Activated CD8-positive, alpha-beta T cell treated with anti-CD3 and anti-CD28 coated beads for 36 hours (primary cell): ENCODE measurements at regions of chr1 and their contacts with region 1.

Region 1: DNA sequence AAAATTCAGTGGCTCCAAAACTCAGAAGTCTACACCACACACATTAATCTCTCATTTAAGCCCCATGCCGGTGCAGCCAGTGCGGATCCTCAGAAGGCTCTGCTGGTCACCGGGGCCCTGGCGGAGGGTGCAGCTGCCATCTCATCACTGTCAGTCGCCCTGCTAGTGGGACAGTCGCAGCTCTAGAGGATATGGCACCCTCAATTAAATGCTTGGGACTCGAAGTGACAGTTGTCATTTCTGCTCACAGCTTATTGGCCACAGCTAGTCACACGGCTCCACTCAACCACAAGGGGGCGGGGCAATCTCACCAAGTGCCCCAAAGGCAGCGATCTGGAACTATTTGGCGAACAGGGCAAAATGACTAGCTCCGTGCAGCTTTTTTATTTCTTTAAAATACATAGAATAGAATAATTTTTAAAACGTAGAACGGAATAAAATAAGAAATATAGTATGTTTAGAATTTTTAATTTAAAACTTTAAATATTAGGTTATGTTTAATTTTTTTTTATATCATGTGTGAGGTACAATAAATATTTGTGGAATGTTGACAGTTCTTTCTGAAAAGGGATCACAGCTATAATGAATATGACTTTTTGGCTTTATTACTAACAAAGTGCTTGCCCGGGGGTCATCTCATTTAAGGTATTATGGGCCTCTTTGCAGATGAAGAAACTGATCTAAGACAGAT is 8.0 kb upstream of the MAN1C1 start:
- DNase-seq: peak; percentile 97
- ATAC-seq: peak; percentile 98
- H3K4me3 Mint-ChIP-seq: no peak overlapping the region
- H3K27ac Mint-ChIP-seq: no peak overlapping the region
- H3K4me1 Mint-ChIP-seq: peaks cover 16% of the 10 kb centered on the region
- H3K27me3 Mint-ChIP-seq: peaks cover 16% of the 10 kb centered on the region
- CTCF ChIP-seq: peak; percentile 28

Region 2: GRCh38 chr1:25572708-25573600 is 35.7 kb before region 1 on chr1:
- CTCF ChIA-PET with region 1: interaction called, 21 read pairs
- POLR2A ChIA-PET with region 1: no interaction called
- intact Hi-C with region 1: no loop called
- DNase-seq: peak; percentile 78
- ATAC-seq: peak; percentile 79
- H3K4me3 Mint-ChIP-seq: no peak overlapping the region
- H3K27ac Mint-ChIP-seq: no peak overlapping the region
- H3K4me1 Mint-ChIP-seq: peaks cover 48% of the 10 kb centered on the region
- H3K27me3 Mint-ChIP-seq: no peaks in the 10 kb centered on the region
- CTCF ChIP-seq: peak; percentile 82

Region 3: GRCh38 chr1:25651824-25652741 is 43.5 kb after region 1 on chr1:
- CTCF ChIA-PET with region 1: no interaction called
- POLR2A ChIA-PET with region 1: no interaction called
- intact Hi-C with region 1: no loop called
- DNase-seq: no peak
- ATAC-seq: no peak
- H3K4me3 Mint-ChIP-seq: no peak overlapping the region
- H3K27ac Mint-ChIP-seq: no peak overlapping the region
- H3K4me1 Mint-ChIP-seq: peaks cover 19% of the 10 kb centered on the region
- H3K27me3 Mint-ChIP-seq: no peaks in the 10 kb centered on the region
- CTCF ChIP-seq: no peak

Region 4: DNA sequence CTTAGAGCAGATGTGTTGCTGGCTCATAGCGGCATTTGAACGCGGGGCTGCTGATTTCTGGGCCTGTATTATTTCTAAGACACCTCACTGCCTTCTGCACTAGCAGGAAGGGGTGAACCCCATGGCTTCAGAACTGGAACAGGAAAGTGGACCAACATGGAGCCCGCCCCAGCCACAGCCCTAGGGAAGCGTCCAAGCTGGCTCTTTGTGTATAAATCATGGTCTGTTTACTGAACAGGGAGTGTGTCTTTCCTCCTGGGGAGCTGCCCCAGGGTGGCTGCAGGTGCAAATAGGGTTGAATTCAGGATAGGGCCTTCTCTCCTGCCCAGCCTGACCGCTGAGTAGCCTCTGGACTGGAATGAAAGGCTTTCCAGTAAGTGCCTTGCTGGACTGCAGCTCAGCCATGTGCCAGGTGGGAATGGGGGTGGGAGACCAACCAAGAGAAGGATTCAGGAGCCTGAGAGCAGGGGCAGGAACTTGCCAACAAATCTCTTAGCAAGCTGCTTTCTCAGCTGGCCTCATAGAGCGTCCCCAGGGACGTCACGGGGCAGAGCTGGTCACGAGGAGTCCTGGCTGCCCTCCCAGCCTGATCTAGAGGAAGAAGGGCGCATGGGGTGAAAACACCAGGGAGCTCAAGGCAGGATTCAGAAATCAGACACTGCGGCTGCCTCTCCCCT is 134.7 kb after region 1 on chr1:
- CTCF ChIA-PET with region 1: no interaction called
- POLR2A ChIA-PET with region 1: no interaction called
- intact Hi-C with region 1: no loop called
- DNase-seq: no peak
- ATAC-seq: no peak
- H3K4me3 Mint-ChIP-seq: no peak overlapping the region
- H3K27ac Mint-ChIP-seq: no peak overlapping the region
- H3K4me1 Mint-ChIP-seq: peaks cover 9% of the 10 kb centered on the region
- H3K27me3 Mint-ChIP-seq: no peaks in the 10 kb centered on the region
- CTCF ChIP-seq: no peak

Region 5: GRCh38 chr1:25796811-25797458 is 188.3 kb after region 1 on chr1:
- CTCF ChIA-PET with region 1: interaction called, 17 read pairs
- POLR2A ChIA-PET with region 1: no interaction called
- intact Hi-C with region 1: loop called (anchors 5 kb)
- DNase-seq: peak; percentile 92
- ATAC-seq: peak; percentile 57
- H3K4me3 Mint-ChIP-seq: peak overlapping the region; percentile 45
- H3K27ac Mint-ChIP-seq: peak overlapping the region; percentile 78
- H3K4me1 Mint-ChIP-seq: peaks cover 44% of the 10 kb centered on the region
- H3K27me3 Mint-ChIP-seq: no peaks in the 10 kb centered on the region
- CTCF ChIP-seq: peak; percentile 81

Region 6: GRCh38 chr1:25802915-25803314 is 194.3 kb after region 1 on chr1:
- CTCF ChIA-PET with region 1: interaction called, 17 read pairs
- POLR2A ChIA-PET with region 1: no interaction called
- intact Hi-C with region 1: loop called (anchors 5 kb)
- DNase-seq: peak; percentile 41
- ATAC-seq: peak; percentile 47
- H3K4me3 Mint-ChIP-seq: no peak overlapping the region
- H3K27ac Mint-ChIP-seq: no peak overlapping the region
- H3K4me1 Mint-ChIP-seq: peaks cover 38% of the 10 kb centered on the region
- H3K27me3 Mint-ChIP-seq: no peaks in the 10 kb centered on the region
- CTCF ChIP-seq: no peak

Region 7: DNA sequence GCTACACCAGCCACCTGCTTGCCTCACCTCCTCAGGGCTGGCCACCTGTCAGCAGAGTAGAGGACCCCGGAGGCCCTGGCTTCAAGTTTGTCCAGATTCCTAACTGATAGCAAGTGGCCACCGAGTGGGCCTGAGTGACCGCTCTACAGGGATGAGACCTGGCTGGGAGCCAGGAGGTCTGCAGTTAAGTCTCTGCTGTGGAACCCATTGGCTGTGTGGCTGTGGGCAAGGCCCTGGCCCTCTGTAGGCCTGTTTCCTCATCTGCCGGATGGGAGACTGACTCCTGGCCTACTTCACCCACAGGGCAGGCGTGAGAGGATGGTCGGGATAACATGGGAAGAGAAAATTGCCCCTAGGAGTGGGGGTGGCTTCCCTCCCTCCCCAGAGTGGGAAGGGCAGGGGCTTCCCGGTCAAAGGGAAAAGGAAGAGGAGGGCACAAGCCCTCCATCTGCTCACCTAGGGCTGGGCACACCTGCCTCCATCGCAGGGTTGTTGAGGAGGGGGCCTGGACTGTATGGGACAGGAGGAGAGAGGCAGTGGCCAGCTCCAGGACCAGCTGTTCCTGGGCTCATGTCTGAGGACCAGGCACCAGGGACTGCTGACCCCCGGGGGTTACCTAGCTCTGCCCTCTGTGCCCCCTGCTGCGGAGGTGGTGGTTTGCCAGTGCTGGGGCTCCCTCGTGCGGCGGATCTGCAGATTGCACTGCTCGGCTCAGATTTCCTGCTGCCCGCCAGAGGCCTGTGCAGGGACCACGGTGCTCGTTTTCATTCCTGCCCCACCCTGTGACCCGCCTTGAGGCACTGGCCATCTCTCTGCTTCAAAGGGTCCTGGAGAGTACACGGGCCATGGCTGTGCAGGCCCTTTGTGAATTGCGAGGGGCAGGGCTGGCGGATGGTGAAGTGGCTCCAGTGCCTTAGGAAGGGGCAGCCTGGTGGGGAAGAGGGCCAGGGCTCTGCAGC is 202.0 kb after region 1 on chr1:
- CTCF ChIA-PET with region 1: interaction called, 16 read pairs
- POLR2A ChIA-PET with region 1: no interaction called
- intact Hi-C with region 1: no loop called
- DNase-seq: peak; percentile 89
- ATAC-seq: peak; percentile 95
- H3K4me3 Mint-ChIP-seq: no peak overlapping the region
- H3K27ac Mint-ChIP-seq: no peak overlapping the region
- H3K4me1 Mint-ChIP-seq: no peaks in the 10 kb centered on the region
- H3K27me3 Mint-ChIP-seq: no peaks in the 10 kb centered on the region
- CTCF ChIP-seq: peak; percentile 99